AG04450 (cell line): ENCODE measurements at regions of chr11 and their contacts with region 1.

Region 1: DNA sequence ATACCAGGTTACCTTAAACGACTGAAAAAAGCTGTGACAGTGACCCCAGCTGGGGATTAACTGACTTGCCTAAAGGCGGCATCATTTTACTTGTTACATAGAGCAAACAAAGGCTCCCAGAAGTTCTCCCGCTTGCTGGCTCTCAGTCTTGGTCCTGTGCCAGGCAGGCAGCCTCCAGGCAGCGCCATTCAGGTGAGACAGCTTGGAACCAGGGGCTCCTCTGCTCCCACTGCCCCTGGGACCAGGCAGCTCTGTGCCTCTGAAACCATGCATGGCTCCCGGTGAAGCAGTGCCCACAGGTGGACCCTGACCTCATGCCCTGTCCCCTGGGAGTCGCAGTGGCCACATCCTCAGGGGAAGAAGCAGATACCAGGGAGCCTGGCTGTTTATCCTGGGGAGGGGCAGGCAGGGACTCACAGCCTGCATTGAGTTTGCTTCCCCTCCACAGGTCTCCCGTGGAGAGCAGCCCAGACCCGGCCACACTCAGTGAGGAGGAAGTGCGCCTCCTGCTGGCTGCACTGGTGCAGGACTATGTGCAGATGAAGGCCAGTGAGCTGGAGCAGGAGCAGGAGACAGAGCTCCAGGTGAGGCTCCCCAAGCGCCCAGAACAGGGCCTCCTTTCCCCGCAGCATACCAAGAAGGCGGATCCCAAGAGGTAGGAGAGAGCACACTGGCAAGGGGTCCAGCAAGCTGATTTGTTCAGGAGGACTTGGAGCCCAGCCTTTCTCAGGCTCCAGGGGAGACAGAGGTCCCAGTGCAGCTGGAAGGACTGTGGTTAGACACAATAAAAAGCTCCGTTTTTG is 15.6 kb upstream of the CYP2R1 start:
- DNase-seq: no peak
- H3K4me3 ChIP-seq: no peak overlapping the region
- H3K27ac ChIP-seq: no peak overlapping the region
- H3K27me3 ChIP-seq: no peaks in the 10 kb centered on the region
- CTCF ChIP-seq: peak; percentile 66

Region 2: DNA sequence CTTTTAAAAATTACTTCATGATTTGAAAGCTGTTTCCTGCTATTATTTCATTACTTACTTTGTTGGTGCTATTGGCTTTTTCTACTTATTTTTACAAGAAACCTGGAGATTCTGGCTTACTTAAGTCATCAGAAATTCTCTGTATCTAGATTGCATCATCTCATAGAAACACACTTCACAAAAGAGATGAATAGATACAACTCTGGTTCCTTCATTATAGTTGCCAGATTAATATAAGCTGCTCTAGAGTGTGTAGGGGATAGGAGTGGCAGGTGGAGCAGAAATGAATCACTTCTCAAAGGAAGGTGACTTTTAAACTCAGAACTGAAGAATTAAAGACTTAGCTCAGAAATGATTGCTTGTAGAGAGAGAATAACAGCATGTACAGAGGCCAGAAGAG is 35.6 kb before region 1 on chr11:
- CTCF ChIA-PET with region 1: interaction called, 14 read pairs
- POLR2A ChIA-PET with region 1: no interaction called
- DNase-seq: no peak
- H3K4me3 ChIP-seq: no peak overlapping the region
- H3K27ac ChIP-seq: no peak overlapping the region
- H3K27me3 ChIP-seq: no peaks in the 10 kb centered on the region
- CTCF ChIP-seq: no peak

Region 3: GRCh38 chr11:14892036-14892567 is 15.5 kb before region 1 on chr11 and contains the start of gene CYP2R1:
- CTCF ChIA-PET with region 1: interaction called, 37 read pairs
- POLR2A ChIA-PET with region 1: interaction called, 4 read pairs
- DNase-seq: peak; percentile 89
- H3K4me3 ChIP-seq: peak within 1 kb of the TSS; percentile 85
- H3K27ac ChIP-seq: peak within 1 kb of the TSS; percentile 57
- H3K27me3 ChIP-seq: peaks cover 8% of the 10 kb centered on the region
- CTCF ChIP-seq: no peak
- polyA plus RNA-seq, gene CYP2R1: 6.5 and 9.0 TPM in 2 replicates

Region 4: GRCh38 chr11:15074206-15075161 is 166.9 kb after region 1 on chr11:
- CTCF ChIA-PET with region 1: interaction called, 42 read pairs
- POLR2A ChIA-PET with region 1: no interaction called
- DNase-seq: peak; percentile 20
- H3K4me3 ChIP-seq: peak overlapping the region; percentile 29; the same call in 1 of the 2 replicates
- H3K27ac ChIP-seq: no peak overlapping the region
- H3K27me3 ChIP-seq: peaks cover 31% of the 10 kb centered on the region
- CTCF ChIP-seq: peak; percentile 69